ENCODE measurements at regions of chr5 and their contacts with region 1.

Region 1: GRCh38 chr5:72141440-72142355 is 34.4 kb downstream of the MAP1B start:
- DNase-seq: peak; percentile 68 to 74
- H3K4me3 ChIP-seq: no peak overlapping the region
- H3K4me1 ChIP-seq: peaks cover 63% of the 10 kb centered on the region
- H3K27me3 ChIP-seq: no peaks in the 10 kb centered on the region

Region 2: GRCh38 chr5:72244862-72245371 is 103.2 kb after region 1 on chr5:
- in situ Hi-C with region 1: loop called (anchors 10 kb)
- DNase-seq: peak; percentile 34 to 50
- H3K4me3 ChIP-seq: no peak overlapping the region
- H3K4me1 ChIP-seq: peaks cover 37% of the 10 kb centered on the region
- H3K27me3 ChIP-seq: no peaks in the 10 kb centered on the region

Region 3: DNA sequence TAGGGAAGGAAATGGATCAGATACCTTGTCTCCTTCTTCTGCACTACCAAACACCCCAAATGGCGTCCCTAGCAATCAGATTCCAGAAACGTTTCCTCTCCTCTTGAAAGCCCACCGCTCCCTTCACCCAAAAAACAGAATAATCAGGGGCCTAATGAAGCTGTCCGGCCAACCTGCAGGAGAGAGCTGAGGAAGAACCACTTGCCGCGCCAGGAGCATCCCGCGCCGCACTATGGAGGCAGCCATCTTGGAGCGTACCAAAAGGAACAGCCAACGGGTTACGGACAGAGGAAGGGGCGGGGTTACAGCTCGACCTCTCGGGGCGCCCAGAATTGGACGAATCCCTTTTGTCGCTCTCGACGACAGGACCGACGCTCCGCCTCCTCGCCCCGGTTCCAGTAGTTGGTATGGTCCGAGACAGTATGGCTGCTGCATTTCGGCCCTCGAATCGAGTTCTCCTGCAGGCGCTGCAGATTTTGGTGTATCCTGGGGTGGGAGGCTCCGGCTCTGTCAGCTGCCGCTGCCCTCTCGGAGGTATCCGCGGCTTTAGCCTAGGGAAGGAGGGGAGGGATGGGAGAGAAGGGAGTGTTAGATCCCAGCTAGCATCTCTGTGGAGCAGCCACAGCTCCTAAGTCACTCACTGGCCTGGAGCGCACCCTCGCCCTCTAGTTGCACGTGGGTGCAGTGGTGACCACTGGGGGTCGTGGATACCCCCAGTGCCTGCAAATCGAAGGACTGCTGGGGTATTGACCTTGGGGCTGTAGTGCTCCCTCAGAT is 178.5 kb after region 1 on chr5 and contains the starts of genes MRPS27 and PTCD2:
- in situ Hi-C with region 1: loop called (anchors 10 kb)
- DNase-seq: peak; percentile 94 to 98
- H3K4me3 ChIP-seq: peak within 1 kb of the TSS; percentile 84
- H3K4me1 ChIP-seq: peaks cover 9% of the 10 kb centered on the region
- H3K27me3 ChIP-seq: no peaks in the 10 kb centered on the region

Region 4: DNA sequence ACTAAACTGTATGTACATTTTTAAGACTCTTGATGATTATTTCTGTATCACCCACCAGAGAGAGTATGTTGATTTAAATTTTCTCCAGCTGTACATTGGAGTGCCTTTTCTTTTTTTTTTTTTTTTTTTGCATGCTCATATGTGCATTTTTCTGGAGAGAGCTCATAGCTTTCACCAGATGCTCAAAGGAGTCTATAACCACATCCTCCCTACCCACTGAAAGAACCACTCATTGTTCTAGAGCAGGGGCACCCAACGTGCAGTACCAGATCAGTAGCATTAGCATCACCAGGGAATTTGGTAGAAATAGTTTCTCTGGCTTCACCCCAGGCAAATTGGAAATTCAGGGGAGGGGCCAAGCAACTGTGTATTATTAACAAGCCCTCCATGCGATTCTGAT is 924.8 kb after region 1 on chr5:
- in situ Hi-C with region 1: no loop called
- DNase-seq: no peak
- H3K4me3 ChIP-seq: no peak overlapping the region
- H3K4me1 ChIP-seq: peaks cover 13% of the 10 kb centered on the region
- H3K27me3 ChIP-seq: no peaks in the 10 kb centered on the region